Tibial artery (tissue), 4 donors: ENCODE measurements at regions of chr3 and their contacts with region 1.

Region 1: GRCh38 chr3:167837466-167837865 is 101.9 kb downstream of the SERPINI1 start:
- DNase-seq: no peak
- H3K4me3 ChIP-seq: no peak overlapping the region
- H3K27ac ChIP-seq: no peak overlapping the region
- H3K4me1 ChIP-seq: no peaks in the 10 kb centered on the region
- H3K27me3 ChIP-seq: no peaks in the 10 kb centered on the region
- CTCF ChIP-seq: peak; percentile 33 to 36

Region 2: DNA sequence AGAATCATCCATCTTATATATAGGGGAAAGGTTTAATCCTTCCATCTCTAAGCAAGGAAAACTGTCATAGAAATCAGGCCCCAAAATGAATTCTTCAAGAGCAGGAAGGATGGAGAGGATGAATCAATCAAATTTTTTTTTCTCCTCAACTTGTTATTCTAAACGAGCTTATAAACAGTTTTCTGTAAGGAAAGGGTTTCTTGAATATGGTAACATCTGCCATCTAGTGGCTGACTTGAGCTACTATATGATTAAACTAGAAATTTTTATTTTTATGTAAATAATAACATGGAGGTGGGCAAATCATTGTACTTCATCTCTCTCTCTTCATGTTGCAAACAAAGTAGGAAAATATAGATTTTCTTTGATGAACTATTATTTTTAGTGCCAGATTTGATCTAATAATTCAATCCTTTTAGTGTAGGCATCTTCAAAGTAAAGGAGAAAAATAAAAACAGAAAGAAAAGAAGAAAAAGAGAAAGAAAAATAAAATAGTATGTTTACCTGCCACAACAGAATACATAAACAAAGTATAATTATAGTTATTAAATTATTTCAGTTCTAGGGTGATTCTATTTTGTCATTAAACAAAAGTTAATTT is 44.7 kb after region 1 on chr3:
- intact Hi-C with region 1: loop called (anchors 5 kb)
- DNase-seq: no peak
- H3K4me3 ChIP-seq: no peak overlapping the region
- H3K27ac ChIP-seq: no peak overlapping the region
- H3K4me1 ChIP-seq: peaks cover 0 to 7% (median 2%) of the 10 kb centered on the region in 4 donors
- H3K27me3 ChIP-seq: no peaks in the 10 kb centered on the region
- CTCF ChIP-seq: peak; percentile 66 to 68

Region 3: DNA sequence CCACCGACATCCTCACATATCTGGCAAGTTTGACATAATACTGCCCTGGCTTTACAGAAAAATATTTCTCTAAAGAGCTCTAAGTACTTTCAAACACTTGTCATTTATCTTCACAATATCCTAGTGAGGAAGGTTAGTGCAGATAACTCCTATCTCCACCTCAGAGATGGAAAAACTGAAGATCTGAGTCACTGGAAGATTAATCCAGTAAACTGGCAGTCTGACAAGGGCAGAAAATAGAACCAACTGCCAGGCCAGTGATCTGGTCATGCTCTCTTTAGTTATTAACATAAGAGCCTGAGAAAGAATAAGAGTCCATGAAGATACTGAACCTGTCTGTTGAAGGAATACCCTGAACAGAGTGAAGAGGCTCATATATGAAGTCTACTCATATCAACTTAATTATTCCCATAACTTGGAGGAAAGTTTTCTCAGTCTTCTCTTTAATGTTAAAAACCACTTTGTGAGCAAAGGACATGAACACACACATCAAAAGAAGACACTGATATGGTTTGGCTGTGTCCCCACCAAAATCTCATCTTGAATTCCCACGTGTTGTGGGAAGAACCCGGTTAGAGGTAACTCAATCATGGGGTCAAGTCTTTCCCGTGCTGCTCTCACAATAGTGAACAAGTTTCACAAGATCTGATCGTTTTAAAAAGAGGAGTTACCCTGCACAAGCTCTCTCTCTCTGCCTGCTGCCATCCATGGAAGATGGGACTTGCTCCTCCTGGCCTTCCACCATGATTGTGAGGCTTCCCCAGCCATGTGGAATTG is 196.9 kb after region 1 on chr3:
- intact Hi-C with region 1: no loop called
- DNase-seq: no peak
- H3K4me3 ChIP-seq: no peak overlapping the region
- H3K27ac ChIP-seq: no peak overlapping the region
- H3K4me1 ChIP-seq: no peaks in the 10 kb centered on the region
- H3K27me3 ChIP-seq: no peaks in the 10 kb centered on the region
- CTCF ChIP-seq: no peak